CD4-positive, alpha-beta T cell (primary cell): ENCODE measurements at regions of chr2 and their contacts with region 1.

Region 1: GRCh38 chr2:69436938-69437750 is at the start of gene NFU1:
- DNase-seq: peak; percentile 70 to 95 (median 82)
- ATAC-seq: peak; percentile 77
- H3K4me3 ChIP-seq: peak within 1 kb of the TSS; percentile 81
- H3K4me3 Mint-ChIP-seq: peak within 1 kb of the TSS; percentile 94
- H3K27ac ChIP-seq: peak within 1 kb of the TSS; percentile 87 to 94
- H3K27ac Mint-ChIP-seq: peak within 1 kb of the TSS; percentile 99
- H3K4me1 ChIP-seq: peaks cover 19% of the 10 kb centered on the region
- H3K4me1 Mint-ChIP-seq: peaks cover 44% of the 10 kb centered on the region
- H3K27me3 ChIP-seq: no peaks in the 10 kb centered on the region
- H3K27me3 Mint-ChIP-seq: no peaks in the 10 kb centered on the region
- CTCF ChIP-seq: peak; percentile 25
- total RNA-seq, gene NFU1: 18.5 to 22.2 TPM

Region 2: GRCh38 chr2:69459936-69460335 is 22.8 kb after region 1 on chr2:
- CTCF ChIA-PET with region 1: no interaction called
- POLR2A ChIA-PET with region 1: interaction called, 11 read pairs
- intact Hi-C with region 1: no loop called
- DNase-seq: no peak
- ATAC-seq: no peak
- H3K4me3 ChIP-seq: no peak overlapping the region
- H3K4me3 Mint-ChIP-seq: no peak overlapping the region
- H3K27ac ChIP-seq: no peak overlapping the region
- H3K27ac Mint-ChIP-seq: peak overlapping the region; percentile 46
- H3K4me1 ChIP-seq: no peaks in the 10 kb centered on the region
- H3K4me1 Mint-ChIP-seq: peaks cover 36% of the 10 kb centered on the region
- H3K27me3 ChIP-seq: no peaks in the 10 kb centered on the region
- H3K27me3 Mint-ChIP-seq: no peaks in the 10 kb centered on the region
- CTCF ChIP-seq: no peak

Region 3: DNA sequence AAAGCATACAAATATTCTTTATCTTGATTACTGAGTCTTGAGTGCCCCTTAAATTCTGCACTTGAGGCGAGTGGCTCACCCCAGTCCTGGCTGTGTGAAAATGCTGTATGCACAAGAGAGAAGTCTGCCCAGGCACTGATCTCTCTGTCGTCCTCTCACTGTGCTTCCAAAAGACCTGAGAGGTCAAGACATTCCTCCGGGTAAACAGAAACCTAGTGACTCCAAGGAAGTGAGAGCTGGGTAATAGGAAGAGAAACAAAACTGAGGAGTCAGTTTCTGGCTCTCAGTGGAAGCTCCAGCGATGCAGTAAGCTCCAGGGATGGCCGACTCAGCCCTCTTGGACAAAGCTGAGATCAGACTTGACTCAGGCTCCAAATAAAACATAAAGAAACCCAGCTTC is 135.5 kb after region 1 on chr2:
- CTCF ChIA-PET with region 1: no interaction called
- POLR2A ChIA-PET with region 1: no interaction called
- intact Hi-C with region 1: loop called in 1 of 2 experiments (anchors 5 kb)
- DNase-seq: no peak
- ATAC-seq: no peak
- H3K4me3 ChIP-seq: no peak overlapping the region
- H3K4me3 Mint-ChIP-seq: peak overlapping the region; percentile 17
- H3K27ac ChIP-seq: peak overlapping the region in 1 of 2 donors; percentile 29
- H3K27ac Mint-ChIP-seq: peak overlapping the region; percentile 81
- H3K4me1 ChIP-seq: peaks cover 58% of the 10 kb centered on the region
- H3K4me1 Mint-ChIP-seq: peaks cover 90% of the 10 kb centered on the region
- H3K27me3 ChIP-seq: no peaks in the 10 kb centered on the region
- H3K27me3 Mint-ChIP-seq: no peaks in the 10 kb centered on the region
- CTCF ChIP-seq: no peak

Region 4: DNA sequence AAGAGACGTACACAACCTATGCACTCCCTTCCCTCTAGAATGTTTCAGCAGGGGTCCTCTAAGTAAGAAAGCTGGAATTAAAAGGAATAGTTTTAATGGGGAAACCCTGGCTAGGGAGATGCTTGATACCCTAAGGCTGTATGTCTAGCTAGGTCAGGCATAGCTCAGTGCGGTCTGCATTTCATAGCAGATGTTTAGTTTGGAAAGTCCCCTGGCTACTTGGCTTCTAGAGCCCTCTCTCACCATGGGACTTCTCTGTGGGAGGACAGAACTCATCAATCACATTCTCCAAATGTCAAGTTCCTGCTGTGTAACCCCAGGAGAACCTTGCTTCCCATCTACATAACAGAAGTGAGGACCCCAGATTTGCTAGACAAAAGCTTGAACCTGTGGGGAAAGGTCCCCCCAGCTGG is 280.7 kb after region 1 on chr2:
- CTCF ChIA-PET with region 1: interaction called, 3 read pairs
- POLR2A ChIA-PET with region 1: no interaction called
- intact Hi-C with region 1: loop called in 1 of 2 experiments (anchors 5 kb)
- DNase-seq: no peak
- ATAC-seq: no peak
- H3K4me3 ChIP-seq: no peak overlapping the region
- H3K4me3 Mint-ChIP-seq: no peak overlapping the region
- H3K27ac ChIP-seq: no peak overlapping the region
- H3K27ac Mint-ChIP-seq: no peak overlapping the region
- H3K4me1 ChIP-seq: peaks cover 13% of the 10 kb centered on the region
- H3K4me1 Mint-ChIP-seq: peaks cover 17% of the 10 kb centered on the region
- H3K27me3 ChIP-seq: no peaks in the 10 kb centered on the region
- H3K27me3 Mint-ChIP-seq: no peaks in the 10 kb centered on the region
- CTCF ChIP-seq: no peak

Region 5: GRCh38 chr2:70258532-70258874 is 821.4 kb after region 1 on chr2:
- CTCF ChIA-PET with region 1: no interaction called
- POLR2A ChIA-PET with region 1: interaction called, 13 read pairs
- intact Hi-C with region 1: no loop called
- DNase-seq: peak in 3 of 14 experiments; percentile 2 to 37 (median 11)
- ATAC-seq: no peak
- H3K4me3 ChIP-seq: peak overlapping the region; percentile 73
- H3K4me3 Mint-ChIP-seq: peak overlapping the region; percentile 95
- H3K27ac ChIP-seq: peak overlapping the region in 1 of 2 donors; percentile 45
- H3K27ac Mint-ChIP-seq: peak overlapping the region; percentile 86
- H3K4me1 ChIP-seq: peaks cover 20% of the 10 kb centered on the region
- H3K4me1 Mint-ChIP-seq: peaks cover 42% of the 10 kb centered on the region
- H3K27me3 ChIP-seq: no peaks in the 10 kb centered on the region
- H3K27me3 Mint-ChIP-seq: no peaks in the 10 kb centered on the region
- CTCF ChIP-seq: no peak